A673 (cell line): ENCODE measurements at regions of chr10 and their contacts with region 1.

Region 1: DNA sequence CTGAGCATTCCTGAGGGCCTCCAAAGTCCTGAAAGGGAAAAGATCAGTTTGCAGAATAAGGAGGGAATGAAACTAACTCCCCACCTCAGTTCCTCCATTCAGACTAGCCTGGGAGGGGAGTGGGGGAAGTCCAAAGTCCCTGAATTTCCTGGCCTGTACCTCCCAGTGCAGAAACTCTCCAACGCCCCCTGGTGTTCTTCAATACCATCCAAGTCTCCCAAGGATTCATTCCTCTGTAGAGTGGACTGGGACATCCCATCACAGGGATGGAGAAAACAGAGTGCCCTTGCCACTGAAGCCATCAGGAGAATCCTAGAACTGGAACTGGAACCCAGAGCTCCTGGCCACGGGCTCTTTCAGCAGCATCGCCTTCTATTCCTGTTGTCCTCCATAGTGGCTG is 1.6 kb upstream of the COL13A1 start:
- DNase-seq: peak; percentile 74
- H3K4me3 ChIP-seq: no peak overlapping the region
- H3K27ac ChIP-seq: no peak overlapping the region
- H3K4me1 ChIP-seq: peaks cover 15% of the 10 kb centered on the region
- H3K27me3 ChIP-seq: no peaks in the 10 kb centered on the region
- CTCF ChIP-seq: peak; percentile 87

Region 2: DNA sequence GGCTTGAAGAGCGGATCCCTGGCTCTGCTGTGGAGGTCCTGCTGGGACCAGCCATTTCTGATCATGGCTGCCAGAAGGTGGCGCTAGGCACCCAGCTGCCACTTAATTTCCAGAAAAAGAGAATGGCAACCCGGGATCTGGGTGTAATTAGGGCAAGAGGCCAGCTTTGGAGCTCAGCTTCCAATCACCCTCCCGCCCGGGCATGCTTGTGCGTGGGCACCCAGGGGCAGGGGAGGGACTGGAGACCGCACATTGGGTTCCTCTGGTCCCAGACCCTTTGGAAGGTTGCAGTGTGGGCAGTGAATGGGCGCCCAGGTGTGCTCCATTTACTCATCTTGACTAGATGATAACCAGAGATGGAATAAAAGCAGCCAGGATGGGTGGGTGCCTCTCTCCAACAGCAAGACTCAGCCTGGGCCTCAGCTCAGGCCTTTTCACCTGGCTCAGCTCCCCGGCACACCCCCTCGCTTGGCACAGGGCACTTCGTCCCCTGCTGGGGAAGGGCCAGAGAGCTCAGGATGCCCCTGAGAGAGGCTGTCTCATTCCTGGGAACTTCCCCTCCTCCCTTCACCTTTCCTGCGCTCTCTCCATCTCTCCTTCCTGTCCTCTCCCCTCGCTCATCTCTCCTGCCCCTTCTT is 155.3 kb before region 1 on chr10:
- CTCF ChIA-PET with region 1: no interaction called
- POLR2A ChIA-PET with region 1: no interaction called
- intact Hi-C with region 1: loop called (anchors 2 kb)
- DNase-seq: peak; percentile 77
- H3K4me3 ChIP-seq: no peak overlapping the region
- H3K27ac ChIP-seq: no peak overlapping the region
- H3K4me1 ChIP-seq: no peaks in the 10 kb centered on the region
- H3K27me3 ChIP-seq: no peaks in the 10 kb centered on the region
- CTCF ChIP-seq: peak; percentile 91

Region 3: DNA sequence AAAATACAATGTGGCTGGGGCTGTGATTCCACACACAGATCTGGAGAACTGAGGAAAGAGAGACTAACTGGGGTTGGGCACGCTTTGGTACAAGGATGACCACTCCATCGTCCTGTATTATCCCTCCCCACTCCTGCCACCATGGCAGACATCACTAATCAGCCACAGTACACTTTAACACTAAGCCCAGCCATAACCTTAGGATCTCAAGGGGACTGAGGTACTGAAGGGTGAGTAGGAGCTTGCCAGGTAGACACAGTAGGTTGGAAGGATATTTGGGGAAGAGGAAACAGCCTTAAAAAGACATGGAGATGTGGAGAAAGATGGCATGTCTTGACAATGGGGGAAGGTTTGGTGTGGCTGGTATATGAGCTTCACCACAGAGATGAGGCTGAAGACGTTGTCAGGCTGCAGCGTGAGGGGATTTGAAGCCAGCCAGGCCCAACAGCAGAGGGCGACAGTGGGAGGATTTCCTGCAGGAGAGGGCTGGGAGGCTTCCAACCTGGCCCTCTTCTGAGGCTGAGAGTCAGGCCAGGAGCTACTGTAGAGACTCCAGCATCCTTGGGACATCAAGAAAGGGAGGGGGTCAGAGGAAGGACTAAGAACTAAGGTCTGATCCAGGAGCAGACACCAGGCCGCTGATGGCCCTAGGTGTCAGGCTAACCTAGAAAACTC is 57.0 kb before region 1 on chr10:
- CTCF ChIA-PET with region 1: no interaction called
- POLR2A ChIA-PET with region 1: no interaction called
- intact Hi-C with region 1: loop called (anchors 2 kb)
- DNase-seq: peak; percentile 54
- H3K4me3 ChIP-seq: no peak overlapping the region
- H3K27ac ChIP-seq: no peak overlapping the region
- H3K4me1 ChIP-seq: no peaks in the 10 kb centered on the region
- H3K27me3 ChIP-seq: no peaks in the 10 kb centered on the region
- CTCF ChIP-seq: peak; percentile 80